ENCODE measurements at regions of chr1 and their contacts with region 1.

Region 1: DNA sequence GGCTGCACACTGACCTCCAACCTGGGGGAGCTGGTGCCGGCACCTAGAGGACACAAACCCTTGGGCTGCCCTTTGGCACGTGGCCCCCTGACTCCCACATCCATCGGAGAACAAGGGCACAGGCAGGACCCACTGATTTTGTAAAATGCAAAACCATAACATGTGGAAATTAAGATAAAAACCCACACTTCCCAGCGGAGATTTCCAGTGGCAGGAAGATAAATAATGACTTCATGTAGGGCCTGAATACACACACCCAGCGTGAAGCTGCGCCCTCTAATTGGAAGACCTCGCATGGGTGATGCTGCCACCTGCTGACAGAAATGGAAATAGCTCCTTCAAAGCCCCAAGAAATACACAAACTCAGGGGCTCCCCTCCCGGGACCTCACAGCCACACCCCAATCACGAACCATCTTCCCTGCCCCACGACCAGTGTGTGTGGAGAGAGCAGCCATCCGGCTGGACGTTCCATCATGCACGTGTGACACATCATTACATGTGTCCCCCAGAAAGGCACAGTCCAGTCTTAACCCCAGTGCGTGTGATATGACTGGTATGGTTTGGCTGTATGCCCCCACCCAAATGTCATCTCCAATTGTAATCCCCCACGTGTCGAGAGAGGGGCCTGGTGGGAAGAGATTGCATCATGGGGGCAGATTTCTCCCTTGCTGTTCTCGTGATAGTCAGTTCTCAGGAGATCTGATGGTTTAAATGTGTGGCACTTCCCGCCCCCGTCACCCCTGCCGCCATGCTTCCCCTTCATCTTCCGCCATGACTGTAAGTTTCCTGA is 5.7 kb upstream of the TPRG1L start:
- DNase-seq: peak; percentile 66 to 76 (median 68)
- H3K4me3 ChIP-seq: no peak overlapping the region
- H3K4me3 Mint-ChIP-seq: peak overlapping the region in 1 of 2 donors; percentile 86
- H3K27ac ChIP-seq: no peak overlapping the region
- H3K27ac Mint-ChIP-seq: peak overlapping the region in 3 of 7 donors; percentile 44 to 68 (median 61)
- H3K4me1 ChIP-seq: peaks cover 25 to 36% of the 10 kb centered on the region in 2 donors
- H3K4me1 Mint-ChIP-seq: peaks cover 41% of the 10 kb centered on the region
- H3K27me3 ChIP-seq: no peaks in the 10 kb centered on the region
- H3K27me3 Mint-ChIP-seq: peaks cover 2 to 26% (median 7%) of the 10 kb centered on the region in 3 donors
- CTCF ChIP-seq: peak; percentile 85

Region 2: DNA sequence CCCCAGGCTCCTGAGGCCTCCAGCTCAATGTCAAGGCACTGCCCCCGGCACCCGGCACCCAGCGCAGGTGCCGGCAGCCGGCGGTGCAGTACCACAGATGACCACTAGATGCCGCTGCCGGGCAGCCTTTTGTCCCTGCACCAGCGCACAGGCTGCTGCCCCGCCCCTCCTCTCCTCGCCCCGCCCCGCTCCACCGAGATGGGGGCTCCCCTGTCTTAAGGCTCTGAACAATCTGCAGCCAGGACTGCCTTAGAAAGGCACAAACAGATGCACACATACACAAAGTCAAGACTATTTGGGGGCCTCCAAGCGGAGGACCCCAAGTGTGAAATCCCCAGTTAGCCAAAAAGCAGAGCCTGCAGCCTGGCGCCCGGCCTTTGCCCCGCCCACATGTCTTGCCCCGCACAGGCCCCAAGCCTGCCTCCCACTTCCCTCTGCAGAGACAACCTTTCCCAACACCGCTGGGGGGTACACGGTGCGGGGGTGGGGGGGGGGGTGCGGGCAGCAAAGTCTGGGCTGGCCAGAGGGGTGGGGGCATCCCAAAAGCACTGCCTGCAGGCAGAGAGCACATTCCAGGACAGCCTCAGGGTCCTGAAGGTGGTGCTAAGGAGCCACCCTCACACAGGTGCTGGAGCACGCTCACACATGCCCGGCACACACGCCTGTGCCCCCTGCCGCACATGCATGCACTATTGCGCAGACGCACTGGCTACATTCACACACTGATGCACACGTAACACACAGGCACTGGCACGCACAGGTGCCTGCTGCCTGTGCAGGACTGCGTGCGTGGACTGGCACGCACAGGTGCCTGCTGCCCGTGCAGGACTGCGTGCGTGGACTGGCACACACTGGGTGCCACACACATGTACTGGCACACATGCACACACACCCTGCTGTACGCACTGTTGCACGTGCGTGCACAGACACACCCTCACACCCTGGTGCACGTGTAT is 127.5 kb before region 1 on chr1:
- intact Hi-C with region 1: loop called (anchors 2 kb)
- DNase-seq: peak; percentile 55 to 71 (median 65)
- H3K4me3 ChIP-seq: peak overlapping the region in 1 of 3 experiments; percentile 63
- H3K4me3 Mint-ChIP-seq: peak overlapping the region; percentile 65 to 71
- H3K27ac ChIP-seq: no peak overlapping the region
- H3K27ac Mint-ChIP-seq: no peak overlapping the region
- H3K4me1 ChIP-seq: peaks cover 0 to 6% of the 10 kb centered on the region in 2 donors
- H3K4me1 Mint-ChIP-seq: peaks cover 4% of the 10 kb centered on the region
- H3K27me3 ChIP-seq: no peaks in the 10 kb centered on the region
- H3K27me3 Mint-ChIP-seq: peaks cover 0 to 2% (median 0%) of the 10 kb centered on the region in 3 donors
- CTCF ChIP-seq: peak; percentile 100

Region 3: DNA sequence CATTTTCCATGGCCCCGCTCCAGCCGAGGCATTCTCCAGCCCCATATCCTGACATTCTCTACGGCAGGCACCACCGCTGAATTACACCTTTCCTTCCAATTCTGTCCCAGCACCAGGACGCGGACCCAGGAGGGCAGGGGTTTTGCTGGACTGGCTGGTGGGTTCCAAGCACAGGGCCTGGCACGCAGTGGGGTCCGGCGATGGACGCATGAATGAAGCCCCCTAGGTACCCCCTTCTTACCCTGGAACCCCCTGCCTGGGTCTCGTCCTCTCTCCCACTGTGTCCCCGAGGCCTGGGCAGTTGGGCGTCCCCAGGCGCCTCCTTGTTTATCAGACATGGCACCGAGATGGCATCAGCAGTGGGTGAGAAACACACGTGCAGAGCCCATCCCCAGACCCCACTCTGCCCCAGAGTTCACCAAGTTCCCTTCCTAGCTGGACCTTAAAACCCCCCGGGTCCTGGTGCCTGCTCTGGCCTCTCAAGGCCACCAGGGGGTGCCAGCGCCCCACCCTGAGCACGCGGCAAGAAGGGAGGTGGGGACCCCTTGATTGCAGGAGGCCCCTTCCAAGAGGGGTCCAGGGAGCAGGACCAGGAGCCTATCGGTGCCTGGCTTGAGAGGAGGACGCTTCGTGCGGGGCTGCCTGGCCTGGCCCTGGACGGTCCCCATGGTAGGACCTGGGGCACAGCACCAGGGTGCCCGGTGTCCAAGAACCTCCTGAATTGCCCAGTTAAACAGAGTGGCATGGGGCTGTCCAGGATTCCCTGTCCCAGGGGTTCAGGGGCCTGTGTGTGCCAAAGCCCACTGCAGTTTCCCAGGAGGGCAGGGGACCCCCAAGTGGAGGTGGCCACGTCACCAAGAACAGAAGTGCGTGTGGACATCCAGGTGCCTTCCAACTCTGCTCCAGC is 53.9 kb before region 1 on chr1:
- intact Hi-C with region 1: loop called (anchors 2 to 5 kb)
- DNase-seq: peak in 2 of 3 donors; percentile 10 to 34
- H3K4me3 ChIP-seq: no peak overlapping the region
- H3K4me3 Mint-ChIP-seq: no peak overlapping the region
- H3K27ac ChIP-seq: no peak overlapping the region
- H3K27ac Mint-ChIP-seq: peak overlapping the region in 3 of 7 donors; percentile 30 to 55 (median 41)
- H3K4me1 ChIP-seq: no peaks in the 10 kb centered on the region
- H3K4me1 Mint-ChIP-seq: no peaks in the 10 kb centered on the region
- H3K27me3 ChIP-seq: no peaks in the 10 kb centered on the region
- H3K27me3 Mint-ChIP-seq: peaks cover 0 to 2% (median 0%) of the 10 kb centered on the region in 3 donors
- CTCF ChIP-seq: peak; percentile 96